ENCODE measurements at regions of chr5 and their contacts with region 1.

Region 1: DNA sequence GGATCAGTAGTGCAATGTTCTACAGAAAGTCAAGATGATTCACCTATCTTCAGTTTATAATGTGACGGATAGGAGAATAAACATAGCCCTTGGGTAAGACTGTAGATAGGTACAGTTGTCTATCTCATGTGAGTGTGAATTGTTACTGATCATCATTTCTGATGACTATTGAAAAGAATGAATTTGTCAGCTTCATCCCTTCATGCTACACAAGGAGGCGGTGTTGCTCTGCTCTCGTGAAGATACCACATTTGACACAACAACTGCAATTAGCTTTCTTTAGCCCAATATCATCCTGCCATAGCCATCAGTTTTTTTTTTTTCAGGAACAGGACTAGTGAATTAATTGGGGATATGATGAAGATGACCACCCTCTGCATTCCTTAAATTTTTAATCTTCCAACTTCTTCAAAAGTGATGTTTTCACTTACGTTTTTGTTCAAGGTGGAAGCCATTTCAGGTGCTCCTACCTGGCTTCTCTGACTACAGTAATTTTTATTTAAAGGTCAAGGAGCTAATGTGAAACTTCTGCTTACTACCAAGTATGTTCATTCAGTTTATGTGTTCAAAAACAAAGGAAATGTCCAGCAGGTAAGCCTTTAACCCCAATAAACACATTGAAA is 152.9 kb upstream of the MOCS2 start:
- DNase-seq: peak; percentile 29
- ATAC-seq: peak; percentile 38; the same call in 1 of the 2 replicates
- H3K4me3 Mint-ChIP-seq: no peak overlapping the region
- H3K27ac Mint-ChIP-seq: no peak overlapping the region
- H3K4me1 Mint-ChIP-seq: no peaks in the 10 kb centered on the region
- H3K27me3 Mint-ChIP-seq: no peaks in the 10 kb centered on the region
- CTCF ChIP-seq: 0 out of 2 replicates have a peak, but pooled peaks have one; percentile 27

Region 2: DNA sequence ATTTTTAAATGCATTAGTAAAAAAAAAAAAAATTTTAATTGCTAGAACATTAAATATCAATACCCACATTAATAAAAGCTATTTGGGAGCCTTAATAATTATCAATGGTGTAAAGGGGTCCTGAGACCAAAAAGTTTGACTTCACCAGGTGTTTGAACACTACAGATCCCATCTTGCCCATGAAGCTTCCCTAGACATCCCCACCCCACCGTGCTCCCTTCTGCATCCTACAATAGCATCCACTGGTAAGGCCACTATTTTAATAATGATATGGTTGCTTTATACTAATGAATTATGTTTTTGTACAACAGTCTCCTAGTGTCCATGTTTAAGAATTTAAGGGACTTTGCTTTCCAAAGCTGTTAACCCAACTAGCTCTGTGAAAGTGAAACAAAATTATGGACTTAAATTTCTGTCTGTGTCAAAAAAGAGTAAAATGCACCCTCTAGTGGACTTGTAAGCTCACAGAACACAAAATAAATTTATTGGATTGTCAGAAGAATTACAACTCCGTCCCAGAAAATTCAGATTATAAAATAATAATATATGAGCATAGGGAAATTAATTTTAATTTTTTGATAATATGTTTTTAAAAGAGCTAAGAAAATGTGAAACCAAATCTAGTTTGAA is 972.0 kb after region 1 on chr5:
- CTCF ChIA-PET with region 1: interaction called, 12 read pairs
- POLR2A ChIA-PET with region 1: no interaction called
- DNase-seq: no peak
- ATAC-seq: peak; percentile 30; the same call in 1 of the 2 replicates
- H3K4me3 Mint-ChIP-seq: no peak overlapping the region
- H3K27ac Mint-ChIP-seq: no peak overlapping the region
- H3K4me1 Mint-ChIP-seq: peaks cover 3% of the 10 kb centered on the region; the same call in 1 of the 2 replicates
- H3K27me3 Mint-ChIP-seq: no peaks in the 10 kb centered on the region
- CTCF ChIP-seq: no peak; the same call in 1 of the 2 replicates

Measured in WTC11 (cell line).